ENCODE measurements at regions of chr2 and their contacts with region 1.

Region 1: GRCh38 chr2:30711646-30712085 is 95.6 kb downstream of the CAPN13 start:
- DNase-seq: peak; percentile 72
- H3K4me3 ChIP-seq: no peak overlapping the region
- H3K27ac ChIP-seq: no peak overlapping the region
- H3K4me1 ChIP-seq: no peaks in the 10 kb centered on the region
- H3K27me3 ChIP-seq: peaks cover 2% of the 10 kb centered on the region
- CTCF ChIP-seq: peak; percentile 100

Region 2: GRCh38 chr2:30098266-30099005 is 613.2 kb before region 1 on chr2:
- CTCF ChIA-PET with region 1: no interaction called
- dilution Hi-C with region 1: no loop called
- in situ Hi-C with region 1: no loop called
- intact Hi-C with region 1: loop called (anchors 5 kb)
- DNase-seq: no peak
- H3K4me3 ChIP-seq: no peak overlapping the region
- H3K27ac ChIP-seq: no peak overlapping the region
- H3K4me1 ChIP-seq: no peaks in the 10 kb centered on the region
- H3K27me3 ChIP-seq: peaks cover 6% of the 10 kb centered on the region
- CTCF ChIP-seq: no peak

Region 3: GRCh38 chr2:30217644-30218337 is 493.9 kb before region 1 on chr2:
- CTCF ChIA-PET with region 1: no interaction called
- dilution Hi-C with region 1: no loop called
- in situ Hi-C with region 1: loop called in 1 of 2 experiments (anchors 5 kb)
- intact Hi-C with region 1: no loop called
- DNase-seq: peak; percentile 31
- H3K4me3 ChIP-seq: no peak overlapping the region
- H3K27ac ChIP-seq: no peak overlapping the region
- H3K4me1 ChIP-seq: peaks cover 29% of the 10 kb centered on the region
- H3K27me3 ChIP-seq: no peaks in the 10 kb centered on the region
- CTCF ChIP-seq: no peak

Region 4: DNA sequence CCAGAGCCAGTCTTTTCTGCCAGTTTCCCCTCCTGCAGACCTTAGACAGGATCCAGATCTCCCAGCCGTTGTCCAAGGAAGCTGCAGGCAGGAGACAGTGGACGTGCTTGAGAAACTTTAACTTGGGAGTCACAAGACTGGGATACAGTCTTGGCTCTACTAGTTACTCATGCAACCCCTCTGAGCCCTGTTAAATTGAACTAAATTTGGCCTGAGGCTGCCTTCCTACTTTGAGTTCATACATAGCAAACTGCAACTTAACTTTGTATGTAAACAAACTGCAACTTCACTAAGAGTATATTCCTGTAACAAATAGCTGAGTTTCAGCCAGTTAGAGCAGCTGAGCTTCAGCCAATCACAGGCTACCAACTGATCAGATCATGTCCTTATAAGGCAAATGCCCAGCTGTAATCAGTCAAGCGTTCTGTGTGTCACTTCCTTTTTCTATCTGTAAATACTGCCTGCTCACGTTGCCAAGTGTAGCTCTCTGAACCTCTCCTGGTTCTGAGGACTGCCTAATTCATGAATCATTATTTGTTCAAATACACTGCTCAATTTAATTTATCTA is 45.3 kb before region 1 on chr2:
- CTCF ChIA-PET with region 1: no interaction called
- dilution Hi-C with region 1: no loop called
- in situ Hi-C with region 1: no loop called
- intact Hi-C with region 1: no loop called
- DNase-seq: peak; percentile 94
- H3K4me3 ChIP-seq: no peak overlapping the region
- H3K27ac ChIP-seq: peak overlapping the region; percentile 89
- H3K4me1 ChIP-seq: peaks cover 25% of the 10 kb centered on the region
- H3K27me3 ChIP-seq: no peaks in the 10 kb centered on the region
- CTCF ChIP-seq: no peak

Region 5: GRCh38 chr2:30862054-30862651 is 150.5 kb after region 1 on chr2:
- CTCF ChIA-PET with region 1: no interaction called
- dilution Hi-C with region 1: no loop called
- in situ Hi-C with region 1: loop called in 1 of 2 experiments (anchors 10 kb)
- intact Hi-C with region 1: loop called (anchors 1 kb)
- DNase-seq: peak; percentile 61
- H3K4me3 ChIP-seq: no peak overlapping the region
- H3K27ac ChIP-seq: no peak overlapping the region
- H3K4me1 ChIP-seq: no peaks in the 10 kb centered on the region
- H3K27me3 ChIP-seq: no peaks in the 10 kb centered on the region
- CTCF ChIP-seq: peak; percentile 84 to 89

Region 6: DNA sequence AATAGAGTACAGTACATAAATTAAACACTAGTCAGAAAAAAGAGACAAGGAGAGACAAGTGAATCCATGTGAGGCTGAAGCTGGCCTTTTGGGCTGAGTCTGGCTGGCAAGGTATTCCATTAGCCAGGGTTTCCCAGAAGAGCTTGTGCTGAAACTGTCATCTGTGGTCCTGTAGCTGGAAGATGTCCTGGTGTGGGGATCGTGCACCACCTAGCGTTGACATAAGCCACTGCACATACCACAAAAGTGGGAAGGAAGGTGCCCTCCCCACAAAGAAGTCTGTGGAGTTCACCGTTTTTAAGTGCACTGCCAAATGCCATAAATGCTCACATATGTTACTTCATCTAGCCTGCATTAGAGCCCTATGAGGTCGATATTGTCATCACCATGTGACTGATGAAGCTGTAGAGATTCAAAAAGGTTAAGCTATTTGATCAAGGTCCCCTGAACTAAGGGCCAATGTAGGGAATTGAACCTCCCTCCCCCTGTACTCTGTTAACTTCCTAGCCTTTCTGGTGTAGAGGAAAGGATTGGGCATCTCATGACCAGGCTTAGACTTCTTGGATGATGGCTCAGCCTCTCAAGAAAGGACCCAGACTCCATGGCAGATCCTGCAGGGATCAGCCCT is 458.5 kb after region 1 on chr2:
- CTCF ChIA-PET with region 1: interaction called, 10 read pairs
- dilution Hi-C with region 1: loop called (anchors 25 kb)
- in situ Hi-C with region 1: loop called in 1 of 2 experiments (anchors 5 kb)
- intact Hi-C with region 1: loop called (anchors 1 kb)
- DNase-seq: peak; percentile 60
- H3K4me3 ChIP-seq: no peak overlapping the region
- H3K27ac ChIP-seq: no peak overlapping the region
- H3K4me1 ChIP-seq: no peaks in the 10 kb centered on the region
- H3K27me3 ChIP-seq: no peaks in the 10 kb centered on the region
- CTCF ChIP-seq: peak; percentile 97 to 98

Region 7: GRCh38 chr2:31270136-31270535 is 558.5 kb after region 1 on chr2:
- CTCF ChIA-PET with region 1: no interaction called
- dilution Hi-C with region 1: no loop called
- in situ Hi-C with region 1: no loop called
- intact Hi-C with region 1: no loop called
- DNase-seq: peak; percentile 78
- H3K4me3 ChIP-seq: no peak overlapping the region
- H3K27ac ChIP-seq: no peak overlapping the region
- H3K4me1 ChIP-seq: peaks cover 30% of the 10 kb centered on the region
- H3K27me3 ChIP-seq: no peaks in the 10 kb centered on the region
- CTCF ChIP-seq: no peak

Region 8: GRCh38 chr2:31401580-31401979 is 689.9 kb after region 1 on chr2:
- CTCF ChIA-PET with region 1: interaction called, 20 read pairs
- dilution Hi-C with region 1: no loop called
- in situ Hi-C with region 1: no loop called
- intact Hi-C with region 1: no loop called
- DNase-seq: peak; percentile 100
- H3K4me3 ChIP-seq: no peak overlapping the region
- H3K27ac ChIP-seq: peak overlapping the region; percentile 84
- H3K4me1 ChIP-seq: peaks cover 40% of the 10 kb centered on the region
- H3K27me3 ChIP-seq: no peaks in the 10 kb centered on the region
- CTCF ChIP-seq: no peak

Region 9: GRCh38 chr2:31523871-31524492 is 812.3 kb after region 1 on chr2:
- CTCF ChIA-PET with region 1: no interaction called
- dilution Hi-C with region 1: no loop called
- in situ Hi-C with region 1: no loop called
- intact Hi-C with region 1: loop called (anchors 1 kb)
- DNase-seq: peak; percentile 46
- H3K4me3 ChIP-seq: no peak overlapping the region
- H3K27ac ChIP-seq: no peak overlapping the region
- H3K4me1 ChIP-seq: no peaks in the 10 kb centered on the region
- H3K27me3 ChIP-seq: no peaks in the 10 kb centered on the region
- CTCF ChIP-seq: peak; percentile 76 to 77

Measured in mammary epithelial cell (primary cell).